ENCODE measurements at regions of chr4 and their contacts with region 1.

Region 1: GRCh38 chr4:957581-958313 is 15.6 kb downstream of the DGKQ start:
- DNase-seq: no peak
- H3K4me3 ChIP-seq: no peak overlapping the region
- H3K27ac ChIP-seq: no peak overlapping the region
- H3K4me1 ChIP-seq: no peaks in the 10 kb centered on the region
- H3K27me3 ChIP-seq: no peaks in the 10 kb centered on the region
- CTCF ChIP-seq: no peak

Region 2: GRCh38 chr4:813900-814299 is 143.8 kb before region 1 on chr4:
- CTCF ChIA-PET with region 1: interaction called, 12 read pairs
- POLR2A ChIA-PET with region 1: no interaction called
- intact Hi-C with region 1: no loop called
- DNase-seq: no peak
- H3K4me3 ChIP-seq: no peak overlapping the region
- H3K27ac ChIP-seq: no peak overlapping the region
- H3K4me1 ChIP-seq: no peaks in the 10 kb centered on the region
- H3K27me3 ChIP-seq: no peaks in the 10 kb centered on the region
- CTCF ChIP-seq: no peak

Region 3: GRCh38 chr4:876780-877179 is 81.0 kb before region 1 on chr4:
- CTCF ChIA-PET with region 1: no interaction called
- POLR2A ChIA-PET with region 1: no interaction called
- intact Hi-C with region 1: no loop called
- DNase-seq: peak; percentile 17
- H3K4me3 ChIP-seq: no peak overlapping the region
- H3K27ac ChIP-seq: no peak overlapping the region
- H3K4me1 ChIP-seq: no peaks in the 10 kb centered on the region
- H3K27me3 ChIP-seq: no peaks in the 10 kb centered on the region
- CTCF ChIP-seq: peak; percentile 45

Region 4: GRCh38 chr4:1417522-1418390 is 460.0 kb after region 1 on chr4:
- CTCF ChIA-PET with region 1: no interaction called
- POLR2A ChIA-PET with region 1: no interaction called
- intact Hi-C with region 1: no loop called
- DNase-seq: no peak
- H3K4me3 ChIP-seq: no peak overlapping the region
- H3K27ac ChIP-seq: no peak overlapping the region
- H3K4me1 ChIP-seq: no peaks in the 10 kb centered on the region
- H3K27me3 ChIP-seq: peaks cover 89% of the 10 kb centered on the region
- CTCF ChIP-seq: no peak

Region 5: DNA sequence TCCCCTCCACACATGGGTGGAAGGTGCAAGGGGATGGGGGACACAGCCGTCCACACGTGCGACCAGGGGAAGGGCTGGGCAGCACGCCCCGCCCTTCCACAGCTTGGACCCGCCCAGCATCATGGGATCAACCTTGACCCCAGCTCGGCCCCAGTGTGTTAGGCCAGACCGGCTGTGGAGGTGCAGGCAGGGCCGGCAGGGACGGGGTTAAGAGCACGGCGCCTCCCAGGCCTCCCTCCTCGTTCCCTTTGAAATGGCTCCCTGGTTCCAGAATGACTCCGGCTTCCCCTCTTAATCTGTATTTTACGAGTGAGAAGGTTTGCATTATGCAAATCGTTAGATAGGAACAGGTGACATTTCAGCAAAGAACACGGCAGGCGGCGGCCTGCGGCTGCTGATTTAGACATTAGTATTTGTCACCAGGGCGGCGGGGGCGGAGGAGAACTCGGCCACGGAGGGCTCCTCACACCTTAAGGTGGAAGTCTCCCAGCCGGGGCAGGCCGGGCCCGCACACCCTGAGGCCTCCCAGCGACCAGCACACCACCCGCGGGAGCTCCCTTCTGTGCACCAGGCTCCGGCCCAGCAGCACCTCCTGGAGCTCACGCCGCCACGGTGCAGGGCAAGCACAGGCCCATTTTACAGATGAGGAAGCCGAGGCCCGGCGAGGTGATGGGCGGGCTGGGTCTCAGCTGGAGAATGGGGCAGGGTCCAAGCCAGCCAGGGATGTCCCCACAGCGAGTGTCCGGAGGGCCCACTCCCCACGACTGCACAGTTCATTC is 610.2 kb after region 1 on chr4:
- CTCF ChIA-PET with region 1: no interaction called
- POLR2A ChIA-PET with region 1: no interaction called
- intact Hi-C with region 1: no loop called
- DNase-seq: peak; percentile 37
- H3K4me3 ChIP-seq: no peak overlapping the region
- H3K27ac ChIP-seq: no peak overlapping the region
- H3K4me1 ChIP-seq: peaks cover 13% of the 10 kb centered on the region
- H3K27me3 ChIP-seq: no peaks in the 10 kb centered on the region
- CTCF ChIP-seq: 0 out of 2 replicates have a peak, but pooled peaks have one; percentile 16